Activated CD4-positive, alpha-beta T cell treated with anti-CD3 and anti-CD28 coated beads for 36 hours (primary cell): ENCODE measurements at regions of chr13 and their contacts with region 1.

Region 1: DNA sequence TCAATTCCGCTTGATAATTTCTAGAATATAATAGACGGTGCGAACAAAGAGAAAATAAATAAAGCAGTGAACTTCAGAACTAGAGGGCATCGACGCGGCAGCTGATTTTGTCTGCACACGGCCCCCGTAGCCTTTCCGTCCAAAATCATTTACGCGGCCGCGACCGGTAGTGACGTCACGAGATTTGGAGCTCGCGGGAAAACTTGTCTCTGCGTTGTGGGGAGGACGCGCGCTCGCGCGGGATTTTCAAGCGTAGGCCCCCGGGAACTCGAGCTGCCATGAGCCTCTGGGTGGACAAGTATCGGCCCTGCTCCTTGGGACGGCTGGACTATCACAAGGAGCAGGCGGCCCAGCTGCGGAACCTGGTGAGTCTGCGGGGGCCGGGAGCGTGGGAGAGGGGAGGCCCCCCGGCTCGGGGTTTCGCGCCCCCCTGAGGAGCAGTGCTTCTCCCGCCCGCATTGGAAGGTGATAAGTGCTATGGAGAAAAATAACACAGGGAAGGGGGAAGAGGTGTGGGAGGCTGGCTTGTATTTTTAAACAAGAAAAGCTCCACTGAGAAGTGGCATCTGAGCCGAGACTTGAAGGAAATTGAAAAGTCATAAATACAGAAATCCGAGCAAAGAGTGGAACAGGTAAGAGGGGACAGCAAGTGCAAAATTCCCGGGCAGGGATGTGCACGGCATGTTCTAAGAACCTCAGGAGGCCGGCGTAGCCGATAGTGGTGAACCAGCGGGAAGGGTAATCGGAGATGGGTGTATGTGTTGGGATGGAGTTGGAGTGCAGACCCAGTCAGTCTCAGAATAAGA is at the start of gene RFC3:
- DNase-seq: peak; percentile 96
- ATAC-seq: peak; percentile 97
- H3K4me3 Mint-ChIP-seq: peak within 1 kb of the TSS; percentile 96
- H3K27ac Mint-ChIP-seq: peak within 1 kb of the TSS; percentile 97
- H3K4me1 Mint-ChIP-seq: peaks cover 29% of the 10 kb centered on the region
- H3K27me3 Mint-ChIP-seq: no peaks in the 10 kb centered on the region
- total RNA-seq, gene RFC3: 64.6 to 66.4 TPM

Region 2: DNA sequence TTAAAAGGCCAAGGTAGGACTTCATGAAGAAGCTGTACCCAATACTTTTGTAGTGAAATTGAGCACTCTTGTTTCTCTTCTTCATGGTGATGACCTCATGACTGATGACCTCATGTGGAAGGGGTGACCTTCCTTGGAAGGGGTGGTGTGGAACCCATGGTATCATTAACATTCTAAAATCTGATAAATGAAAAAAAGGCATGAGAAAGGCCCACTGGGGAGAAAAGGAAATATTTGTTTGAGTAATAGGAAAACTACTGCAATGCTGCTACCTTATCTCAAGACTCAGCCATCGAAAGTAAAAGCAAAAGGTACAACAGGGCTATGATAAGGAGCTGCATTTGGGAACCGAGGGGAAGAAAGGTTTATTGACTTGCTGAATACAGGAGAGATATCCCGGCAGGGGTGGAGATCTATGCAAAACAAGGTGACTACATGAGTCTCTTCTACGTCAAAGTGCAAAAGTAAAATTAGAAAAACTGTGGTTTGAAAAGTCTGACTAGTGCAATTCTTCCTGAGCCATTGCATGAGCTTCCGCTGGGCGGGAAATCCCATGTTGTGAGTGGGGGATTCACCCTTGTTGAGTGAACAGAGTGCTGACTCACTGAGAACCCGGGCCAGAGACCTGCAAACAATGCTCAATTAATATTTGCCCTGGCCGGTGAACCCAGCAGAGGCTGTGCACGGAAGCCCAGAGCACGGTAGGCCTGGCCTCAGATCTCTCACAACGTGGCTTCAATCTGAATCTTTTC is 139.0 kb before region 1 on chr13:
- CTCF ChIA-PET with region 1: no interaction called
- POLR2A ChIA-PET with region 1: no interaction called
- intact Hi-C with region 1: loop called in 1 of 2 experiments (anchors 1 kb)
- DNase-seq: peak; percentile 91
- ATAC-seq: peak; percentile 90
- H3K4me3 Mint-ChIP-seq: peak overlapping the region; percentile 64
- H3K27ac Mint-ChIP-seq: peak overlapping the region; percentile 89
- H3K4me1 Mint-ChIP-seq: peaks cover 37% of the 10 kb centered on the region
- H3K27me3 Mint-ChIP-seq: no peaks in the 10 kb centered on the region

Region 3: DNA sequence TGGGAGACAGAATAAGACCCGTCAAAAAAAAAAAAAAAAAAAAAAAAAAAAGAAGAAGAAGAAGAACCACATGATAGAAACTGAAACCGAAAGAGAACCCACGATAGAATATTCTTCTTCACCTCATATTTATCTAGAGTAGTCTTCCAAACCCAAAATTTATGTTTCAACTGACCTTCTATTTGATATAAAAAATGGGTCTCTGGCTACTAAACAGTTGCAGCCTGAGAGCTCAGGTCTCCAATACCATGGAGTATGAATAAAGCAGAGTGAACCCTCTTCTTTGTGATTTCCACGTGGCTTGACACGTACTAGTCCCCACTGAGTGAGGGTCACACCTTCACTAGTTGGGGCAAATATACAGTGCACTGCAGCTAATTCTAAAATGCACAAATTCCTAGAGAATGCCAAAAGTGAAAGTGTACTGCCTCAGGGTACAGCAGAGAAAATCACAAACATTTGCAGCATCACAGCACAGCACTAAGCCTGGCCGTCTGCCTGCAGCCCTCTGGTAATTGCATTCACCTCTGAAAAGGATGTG is 31.0 kb before region 1 on chr13:
- CTCF ChIA-PET with region 1: no interaction called
- POLR2A ChIA-PET with region 1: no interaction called
- intact Hi-C with region 1: loop called in 1 of 2 experiments (anchors 2 kb)
- DNase-seq: peak; percentile 18
- ATAC-seq: peak; percentile 69
- H3K4me3 Mint-ChIP-seq: peak overlapping the region; percentile 59
- H3K27ac Mint-ChIP-seq: peak overlapping the region; percentile 60
- H3K4me1 Mint-ChIP-seq: peaks cover 16% of the 10 kb centered on the region
- H3K27me3 Mint-ChIP-seq: peaks cover 2% of the 10 kb centered on the region

Region 4: DNA sequence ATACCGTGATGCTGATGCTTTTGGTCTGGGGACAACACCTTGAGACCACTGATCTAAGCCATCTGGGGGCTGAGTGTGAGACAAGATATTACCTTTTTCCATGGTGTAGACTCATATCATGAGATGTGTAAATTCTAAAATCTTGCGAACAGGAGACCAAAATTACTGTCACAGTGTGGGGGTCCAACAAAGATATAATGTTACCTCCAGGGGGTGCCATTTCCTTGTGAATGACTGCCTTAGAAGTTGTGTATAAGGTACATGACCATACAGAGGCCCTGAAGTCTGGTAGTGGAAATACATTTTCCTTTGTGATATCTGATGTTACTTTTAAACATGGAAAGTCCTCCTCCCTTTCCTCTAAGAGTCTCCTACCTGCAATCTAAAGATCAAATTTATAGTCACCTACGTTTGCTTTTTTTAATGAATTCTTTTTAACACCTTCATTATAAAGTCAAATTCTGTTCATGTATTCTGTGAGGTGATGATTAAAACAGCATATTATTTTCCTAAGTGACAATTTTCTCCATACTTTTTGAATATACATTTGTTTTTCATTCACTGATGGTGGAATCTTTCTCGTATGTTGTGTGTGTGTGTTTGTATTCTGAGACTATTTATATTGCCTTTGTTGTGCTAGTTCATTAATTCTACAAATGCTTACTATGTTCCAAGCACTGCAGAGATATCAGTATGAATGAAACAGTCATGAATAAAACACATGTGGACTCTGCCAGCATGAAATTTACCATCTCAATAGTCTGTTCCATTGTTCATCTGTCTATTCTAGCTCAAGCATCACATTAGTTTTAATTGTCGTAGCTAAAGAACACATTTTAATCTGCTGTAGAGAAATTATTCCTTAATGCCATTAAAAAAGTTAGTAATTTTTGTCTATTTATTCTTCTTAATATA is 113.5 kb after region 1 on chr13:
- CTCF ChIA-PET with region 1: no interaction called
- POLR2A ChIA-PET with region 1: no interaction called
- intact Hi-C with region 1: no loop called
- DNase-seq: no peak
- ATAC-seq: no peak
- H3K4me3 Mint-ChIP-seq: no peak overlapping the region
- H3K27ac Mint-ChIP-seq: no peak overlapping the region
- H3K4me1 Mint-ChIP-seq: no peaks in the 10 kb centered on the region
- H3K27me3 Mint-ChIP-seq: no peaks in the 10 kb centered on the region

Region 5: DNA sequence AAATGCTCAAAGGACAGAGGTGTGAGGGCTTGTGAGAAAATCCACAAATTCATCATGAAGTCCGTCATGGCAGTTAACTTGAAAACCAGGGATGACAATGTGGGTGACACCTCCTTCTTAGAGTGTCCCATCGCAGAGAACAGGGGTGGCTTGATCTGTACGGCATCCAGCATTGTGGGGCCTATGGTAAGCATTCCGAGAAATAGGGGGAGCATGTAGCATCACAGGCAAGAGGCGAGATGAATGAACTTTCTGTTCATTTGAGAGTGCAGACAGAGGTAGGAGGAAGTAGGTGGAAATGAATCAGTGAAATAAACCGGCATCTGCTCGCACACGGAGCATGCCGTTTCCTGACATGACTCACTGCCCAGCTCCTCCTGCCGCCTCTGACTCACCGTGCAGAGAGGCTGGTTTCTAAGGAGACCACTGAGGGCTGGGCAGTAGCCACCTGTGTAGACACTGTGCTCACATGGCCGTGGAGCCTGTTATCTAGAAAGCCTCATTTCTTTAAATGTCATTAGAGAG is 338.8 kb after region 1 on chr13:
- CTCF ChIA-PET with region 1: no interaction called
- POLR2A ChIA-PET with region 1: no interaction called
- intact Hi-C with region 1: loop called (anchors 5 to 10 kb)
- DNase-seq: peak; percentile 80
- ATAC-seq: peak; percentile 96
- H3K4me3 Mint-ChIP-seq: peak overlapping the region; percentile 20
- H3K27ac Mint-ChIP-seq: peak overlapping the region; percentile 68
- H3K4me1 Mint-ChIP-seq: peaks cover 14% of the 10 kb centered on the region
- H3K27me3 Mint-ChIP-seq: peaks cover 24% of the 10 kb centered on the region